Mammary epithelial cell (primary cell): ENCODE measurements at regions of chr12 and their contacts with region 1.

Region 1: GRCh38 chr12:49130151-49131050 is 794 bp downstream of the TUBA1B start:
- DNase-seq: peak; percentile 90
- H3K4me3 ChIP-seq: peak overlapping the region; percentile 73 to 80 (median 76)
- H3K27ac ChIP-seq: peak overlapping the region; percentile 94
- H3K4me1 ChIP-seq: peaks cover 24% of the 10 kb centered on the region
- H3K27me3 ChIP-seq: no peaks in the 10 kb centered on the region
- CTCF ChIP-seq: peak; percentile 86 to 94

Region 2: DNA sequence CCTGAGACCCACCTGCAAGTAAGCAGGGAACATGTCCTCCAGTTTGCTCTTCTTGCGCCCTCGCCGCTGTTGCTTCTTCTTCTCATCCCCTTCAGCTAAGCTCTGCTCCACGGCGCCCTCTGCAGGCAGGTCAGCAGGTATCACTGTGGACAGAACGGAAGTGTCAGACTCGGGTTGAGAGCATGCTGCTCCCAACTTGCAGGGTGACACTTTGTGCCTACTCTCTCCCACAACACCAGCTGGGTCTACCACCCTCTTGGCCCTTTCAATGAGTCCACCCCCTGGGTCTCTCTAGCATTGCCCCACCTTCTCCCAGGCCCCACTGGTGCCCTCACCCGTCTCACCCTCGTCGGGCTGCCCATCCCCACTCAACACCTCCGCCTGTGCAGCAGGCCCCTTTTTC is 86.5 kb before region 1 on chr12:
- CTCF ChIA-PET with region 1: no interaction called
- dilution Hi-C with region 1: loop called (anchors 5 kb)
- in situ Hi-C with region 1: no loop called
- intact Hi-C with region 1: no loop called
- DNase-seq: peak; percentile 19
- H3K4me3 ChIP-seq: no peak overlapping the region
- H3K27ac ChIP-seq: no peak overlapping the region
- H3K4me1 ChIP-seq: no peaks in the 10 kb centered on the region
- H3K27me3 ChIP-seq: no peaks in the 10 kb centered on the region
- CTCF ChIP-seq: peak; percentile 67 to 83

Region 3: DNA sequence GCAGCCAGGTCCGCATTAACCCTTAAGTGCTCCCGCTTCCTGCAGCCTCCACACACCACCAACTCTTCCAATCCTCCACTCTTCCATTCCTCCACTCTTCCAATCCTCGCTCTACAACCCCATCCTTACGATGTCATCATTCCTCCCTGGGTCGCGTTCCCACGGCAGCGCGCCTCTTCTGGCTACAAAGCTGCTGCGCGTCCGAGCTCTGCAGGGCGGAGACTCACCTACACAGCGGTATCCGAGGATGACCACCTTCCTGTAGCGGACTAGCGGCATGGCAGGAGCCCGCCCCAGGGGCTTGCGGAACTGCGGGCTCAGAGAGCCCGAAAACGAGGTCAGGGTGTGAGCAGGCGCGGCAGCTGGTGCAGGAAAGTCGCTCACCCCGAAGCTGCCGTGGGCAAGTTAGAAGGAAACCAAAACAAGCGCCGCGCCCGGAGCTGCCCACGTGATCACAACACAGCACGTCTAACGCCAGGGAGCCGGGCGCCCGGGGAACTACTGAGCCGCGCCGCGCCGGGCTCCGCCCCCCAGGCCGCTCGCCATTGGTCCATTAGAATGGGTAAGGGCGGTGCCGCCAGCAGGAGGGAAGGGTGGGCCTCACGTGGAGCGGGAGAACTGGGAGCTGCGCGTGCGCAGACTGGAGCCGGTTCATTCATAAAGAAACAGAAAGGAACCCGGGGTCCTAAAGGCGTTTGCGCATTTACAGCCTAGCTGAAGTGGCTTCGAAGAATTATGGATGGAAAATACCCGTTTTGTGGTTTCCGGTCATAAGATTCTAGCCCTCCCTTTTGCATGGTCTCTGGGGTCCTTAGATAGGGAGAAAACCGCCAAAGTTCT is 60.7 kb before region 1 on chr12 and contains the start of gene RHEBL1:
- CTCF ChIA-PET with region 1: no interaction called
- dilution Hi-C with region 1: loop called (anchors 5 kb)
- in situ Hi-C with region 1: loop called in 1 of 2 experiments (anchors 5 kb)
- intact Hi-C with region 1: no loop called
- DNase-seq: peak; percentile 98
- H3K4me3 ChIP-seq: peak within 1 kb of the TSS; percentile 64 to 81 (median 72)
- H3K27ac ChIP-seq: peak within 1 kb of the TSS; percentile 45
- H3K4me1 ChIP-seq: peaks cover 12% of the 10 kb centered on the region
- H3K27me3 ChIP-seq: no peaks in the 10 kb centered on the region
- CTCF ChIP-seq: peak in 1 of 2 donors; percentile 30
- total RNA-seq, gene RHEBL1: 1.0 to 2.3 TPM

Region 4: DNA sequence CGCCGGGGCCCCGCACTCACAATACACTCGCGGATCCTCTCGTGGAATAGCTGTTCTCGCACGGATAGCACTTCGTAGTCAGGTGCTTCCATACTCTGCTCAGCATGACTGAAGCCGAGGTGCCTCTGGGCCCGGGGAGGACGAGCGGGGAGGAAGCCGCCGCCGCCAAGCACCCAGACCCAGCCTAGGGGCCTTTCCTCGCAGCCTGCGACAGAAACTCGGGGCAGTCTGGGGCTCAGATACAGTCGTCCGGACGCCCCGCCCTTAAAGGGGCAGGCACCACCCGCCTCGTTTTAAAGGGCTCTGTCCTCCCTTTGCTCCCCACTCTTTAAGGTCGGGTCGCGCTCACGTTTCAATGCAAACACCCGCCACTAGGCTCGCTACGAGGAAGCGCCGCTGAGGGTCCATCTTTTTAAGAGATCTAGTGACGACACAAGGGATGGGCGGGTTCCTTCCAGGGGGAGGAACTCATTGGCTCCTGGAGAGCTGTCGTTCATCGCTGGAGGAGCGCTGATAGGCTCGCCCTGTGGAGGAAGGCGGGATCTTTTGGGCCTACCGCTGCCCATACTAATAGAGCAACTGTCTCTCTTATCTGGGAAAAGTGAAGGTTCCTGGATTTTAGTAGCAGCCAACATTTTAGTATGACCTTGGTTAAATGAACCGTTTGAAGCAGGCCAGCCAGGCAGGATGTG is 19.8 kb before region 1 on chr12 and contains the start of gene LMBR1L:
- CTCF ChIA-PET with region 1: interaction called, 3 read pairs
- dilution Hi-C with region 1: no loop called
- in situ Hi-C with region 1: no loop called
- intact Hi-C with region 1: loop called (anchors 2 kb)
- DNase-seq: peak; percentile 97
- H3K4me3 ChIP-seq: peak within 1 kb of the TSS; percentile 81 to 98 (median 91)
- H3K27ac ChIP-seq: peak within 1 kb of the TSS; percentile 47
- H3K4me1 ChIP-seq: peaks cover 13% of the 10 kb centered on the region
- H3K27me3 ChIP-seq: no peaks in the 10 kb centered on the region
- CTCF ChIP-seq: peak; percentile 36 to 51
- total RNA-seq, gene LMBR1L: 22.8 to 24.2 TPM

Region 5: DNA sequence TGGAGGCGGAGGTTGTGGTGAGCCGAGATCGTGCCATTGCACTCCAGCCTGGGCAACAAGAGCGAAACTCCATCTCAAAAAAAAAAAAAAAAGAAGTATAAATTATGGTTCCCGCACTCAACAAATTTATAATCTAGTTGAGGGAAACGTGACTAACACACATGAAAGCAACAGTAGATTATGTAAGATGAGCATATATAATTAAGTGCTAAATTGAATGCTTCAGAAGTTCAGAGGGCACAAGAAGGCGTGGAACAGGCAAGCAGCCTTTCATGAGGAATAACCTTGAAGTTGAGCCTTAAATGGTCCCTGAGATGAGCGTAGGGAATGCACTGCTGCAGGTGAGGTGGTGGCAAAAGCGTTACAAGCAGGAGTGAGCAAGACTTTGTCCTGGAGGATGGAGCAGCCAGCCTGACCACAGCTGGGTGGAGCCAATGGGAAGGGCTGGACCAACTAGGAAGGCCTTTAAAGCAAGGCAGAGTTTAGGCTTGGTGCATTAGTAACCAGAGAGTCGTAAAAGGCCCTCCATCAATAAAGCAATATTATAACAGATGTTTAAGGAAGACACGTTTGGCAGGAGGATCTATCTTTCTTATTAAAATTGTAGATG is 89.1 kb after region 1 on chr12:
- CTCF ChIA-PET with region 1: no interaction called
- dilution Hi-C with region 1: loop called (anchors 5 kb)
- in situ Hi-C with region 1: no loop called
- intact Hi-C with region 1: no loop called
- DNase-seq: no peak
- H3K4me3 ChIP-seq: no peak overlapping the region
- H3K27ac ChIP-seq: no peak overlapping the region
- H3K4me1 ChIP-seq: peaks cover 6% of the 10 kb centered on the region
- H3K27me3 ChIP-seq: no peaks in the 10 kb centered on the region
- CTCF ChIP-seq: no peak

Region 6: DNA sequence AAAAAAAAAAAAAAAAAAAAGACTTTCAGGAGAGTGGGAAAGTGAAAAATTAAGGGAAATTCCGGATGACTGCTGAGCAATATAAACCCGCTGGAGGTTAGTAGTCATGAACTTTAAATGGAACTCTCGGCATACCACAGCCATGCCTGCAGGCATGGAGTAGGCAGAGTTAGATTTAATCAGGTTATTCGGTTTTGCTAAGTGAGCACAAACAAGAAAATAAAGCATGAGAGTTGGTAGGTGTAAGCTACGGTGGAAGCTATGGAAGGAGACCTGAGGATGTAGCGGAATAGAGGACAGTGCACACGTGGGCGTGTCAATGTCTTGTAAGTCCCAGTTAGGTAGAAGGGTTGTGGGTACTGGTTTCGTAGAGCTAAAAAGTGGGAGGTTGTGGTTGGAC is 122.7 kb after region 1 on chr12:
- CTCF ChIA-PET with region 1: no interaction called
- dilution Hi-C with region 1: no loop called
- in situ Hi-C with region 1: no loop called
- intact Hi-C with region 1: no loop called
- DNase-seq: peak; percentile 85
- H3K4me3 ChIP-seq: no peak overlapping the region
- H3K27ac ChIP-seq: no peak overlapping the region
- H3K4me1 ChIP-seq: no peaks in the 10 kb centered on the region
- H3K27me3 ChIP-seq: no peaks in the 10 kb centered on the region
- CTCF ChIP-seq: no peak

Region 7: GRCh38 chr12:49264738-49265515 is 134.5 kb after region 1 on chr12 and contains the start of gene TUBA1C:
- CTCF ChIA-PET with region 1: interaction called, 4 read pairs
- dilution Hi-C with region 1: no loop called
- in situ Hi-C with region 1: no loop called
- intact Hi-C with region 1: loop called (anchors 1 kb)
- DNase-seq: peak; percentile 95
- H3K4me3 ChIP-seq: peak within 1 kb of the TSS; percentile 75 to 99 (median 89)
- H3K27ac ChIP-seq: peak within 1 kb of the TSS; percentile 94
- H3K4me1 ChIP-seq: peaks cover 46% of the 10 kb centered on the region
- H3K27me3 ChIP-seq: no peaks in the 10 kb centered on the region
- CTCF ChIP-seq: no peak
- total RNA-seq, gene TUBA1C: 455 to 532 TPM